ENCODE measurements at regions of chr5 and their contacts with region 1.

Region 1: DNA sequence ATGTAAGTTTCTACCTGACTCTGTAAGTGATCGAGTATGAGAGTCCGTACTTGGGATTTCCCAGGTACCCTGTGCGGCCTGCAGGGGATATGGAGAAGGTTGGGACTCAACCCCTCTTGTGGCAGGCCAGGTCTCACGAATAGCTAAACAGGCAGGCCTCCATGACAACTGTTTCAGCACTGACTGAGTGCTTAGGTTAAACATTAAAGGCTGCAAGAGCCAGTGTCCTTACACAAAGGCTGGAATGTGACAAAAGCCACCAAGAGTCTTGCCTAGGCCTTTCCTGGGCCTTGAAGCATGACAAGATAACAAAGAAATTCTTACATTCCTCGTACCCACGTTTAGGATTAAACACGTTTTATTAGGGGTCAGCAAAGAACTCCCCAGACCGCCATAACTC is 58.6 kb downstream of the THBS4 start:
- DNase-seq: no peak
- H3K4me3 ChIP-seq: no peak overlapping the region
- H3K27ac ChIP-seq: no peak overlapping the region
- H3K4me1 ChIP-seq: no peaks in the 10 kb centered on the region
- H3K27me3 ChIP-seq: no peaks in the 10 kb centered on the region
- CTCF ChIP-seq: no peak

Region 2: DNA sequence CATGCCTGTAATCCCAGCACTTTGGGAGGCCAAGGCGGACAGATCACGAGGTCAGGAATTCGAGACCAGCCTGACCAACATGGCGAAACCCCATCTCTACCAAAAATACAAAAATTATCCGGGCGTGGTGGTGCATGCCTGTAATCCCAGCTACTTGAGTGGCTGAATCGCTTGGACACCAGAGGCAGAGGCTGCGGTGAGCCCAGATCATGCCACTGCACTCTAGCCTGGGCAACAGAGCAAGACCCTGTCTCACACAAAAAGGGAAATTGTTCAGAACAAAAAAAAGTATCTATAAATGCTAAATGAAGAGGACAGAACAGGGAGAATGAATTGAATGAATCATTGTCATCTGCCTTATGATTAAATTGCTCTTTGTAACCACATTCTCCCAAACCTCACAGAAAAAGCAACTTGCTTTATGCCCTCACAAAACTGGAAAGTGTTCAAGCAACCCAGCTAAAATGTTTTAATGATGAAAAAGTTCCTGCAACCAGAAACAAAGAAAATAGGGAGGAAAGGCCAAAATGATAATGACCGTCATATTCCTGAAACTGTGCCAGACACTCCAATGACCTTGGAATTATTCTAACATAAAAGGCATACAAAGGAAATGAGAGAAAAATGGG is 78.4 kb after region 1 on chr5:
- CTCF ChIA-PET with region 1: no interaction called
- POLR2A ChIA-PET with region 1: no interaction called
- intact Hi-C with region 1: no loop called
- DNase-seq: no peak
- H3K4me3 ChIP-seq: no peak overlapping the region
- H3K27ac ChIP-seq: no peak overlapping the region
- H3K4me1 ChIP-seq: no peaks in the 10 kb centered on the region
- H3K27me3 ChIP-seq: no peaks in the 10 kb centered on the region
- CTCF ChIP-seq: no peak

Region 3: DNA sequence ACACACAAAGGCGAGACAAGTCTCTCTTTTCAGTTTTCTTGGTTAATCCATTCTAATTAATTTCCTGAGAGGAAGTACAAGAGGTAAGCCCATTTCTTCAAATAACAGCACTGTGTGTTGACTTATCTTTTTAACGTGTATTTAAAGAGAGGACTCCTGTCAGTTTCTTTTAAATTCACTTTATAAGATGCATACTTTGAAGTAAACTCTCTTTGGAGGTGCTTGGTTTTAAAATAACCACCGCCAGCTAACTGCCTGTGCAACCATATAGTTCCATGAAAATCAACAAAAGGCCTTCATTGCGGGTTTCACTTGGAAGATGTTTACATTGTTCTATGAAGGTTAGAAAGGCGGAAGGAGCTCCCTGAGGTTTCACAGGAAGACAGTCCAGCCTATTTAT is 175.1 kb after region 1 on chr5:
- CTCF ChIA-PET with region 1: interaction called, 10 read pairs
- POLR2A ChIA-PET with region 1: no interaction called
- intact Hi-C with region 1: no loop called
- DNase-seq: peak; percentile 85
- H3K4me3 ChIP-seq: peak overlapping the region; percentile 1
- H3K27ac ChIP-seq: peak overlapping the region; percentile 57
- H3K4me1 ChIP-seq: peaks cover 17% of the 10 kb centered on the region
- H3K27me3 ChIP-seq: no peaks in the 10 kb centered on the region
- CTCF ChIP-seq: no peak

Region 4: DNA sequence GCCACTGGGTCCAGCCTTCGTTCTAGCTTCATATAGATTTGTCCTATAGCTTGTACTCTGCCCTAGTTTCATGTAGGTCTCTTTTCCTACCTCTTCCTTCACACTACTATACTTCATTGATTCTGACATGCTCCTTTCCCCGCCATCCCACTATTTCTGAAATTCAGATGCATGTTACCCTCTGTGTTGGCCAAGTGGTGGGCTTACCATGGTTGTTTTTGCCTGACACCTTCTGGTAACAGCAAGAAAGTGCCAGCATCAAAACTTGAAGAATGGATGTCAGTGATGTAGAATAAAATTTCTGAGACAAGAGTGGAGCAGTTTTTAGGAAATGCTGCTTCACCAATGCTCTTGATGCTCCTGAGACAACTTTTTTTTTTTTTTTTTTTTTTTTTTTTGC is 181.6 kb after region 1 on chr5:
- CTCF ChIA-PET with region 1: interaction called, 9 read pairs
- POLR2A ChIA-PET with region 1: no interaction called
- intact Hi-C with region 1: loop called (anchors 1 kb)
- DNase-seq: peak; percentile 69
- H3K4me3 ChIP-seq: no peak overlapping the region
- H3K27ac ChIP-seq: no peak overlapping the region
- H3K4me1 ChIP-seq: no peaks in the 10 kb centered on the region
- H3K27me3 ChIP-seq: no peaks in the 10 kb centered on the region
- CTCF ChIP-seq: peak; percentile 75

Region 5: DNA sequence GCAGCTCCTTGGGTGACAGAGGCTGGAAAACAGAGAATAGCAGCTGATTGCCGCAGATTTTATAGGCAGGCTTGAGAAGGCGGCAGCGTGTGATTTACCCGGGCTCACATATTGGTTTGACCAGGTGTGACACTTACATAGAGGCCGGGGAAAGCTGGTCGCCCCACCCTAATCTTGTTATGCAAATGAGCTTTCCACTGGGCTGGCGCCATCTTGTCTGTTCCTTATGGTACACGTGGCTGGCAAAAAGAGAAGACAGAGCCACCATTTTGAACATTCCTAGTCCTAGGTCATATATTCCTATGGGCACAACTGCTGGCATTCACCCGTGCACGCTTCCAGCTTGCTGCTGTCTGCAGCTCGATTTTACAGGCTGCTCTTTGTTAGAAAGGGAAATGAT is 214.7 kb after region 1 on chr5:
- CTCF ChIA-PET with region 1: interaction called, 50 read pairs
- POLR2A ChIA-PET with region 1: no interaction called
- intact Hi-C with region 1: loop called (anchors 1 kb)
- DNase-seq: no peak
- H3K4me3 ChIP-seq: no peak overlapping the region
- H3K27ac ChIP-seq: no peak overlapping the region
- H3K4me1 ChIP-seq: no peaks in the 10 kb centered on the region
- H3K27me3 ChIP-seq: no peaks in the 10 kb centered on the region
- CTCF ChIP-seq: no peak

Region 6: GRCh38 chr5:80487829-80488721 is 394.3 kb after region 1 on chr5 and contains the start of gene FAM151B:
- CTCF ChIA-PET with region 1: no interaction called
- POLR2A ChIA-PET with region 1: no interaction called
- intact Hi-C with region 1: loop called (anchors 10 kb)
- DNase-seq: peak; percentile 94
- H3K4me3 ChIP-seq: peak within 1 kb of the TSS; percentile 72
- H3K27ac ChIP-seq: peak within 1 kb of the TSS; percentile 64
- H3K4me1 ChIP-seq: no peaks in the 10 kb centered on the region
- H3K27me3 ChIP-seq: no peaks in the 10 kb centered on the region
- CTCF ChIP-seq: peak; percentile 32; the same call in 1 of the 2 replicates
- total RNA-seq, gene FAM151B: 4.0 and 4.3 TPM in 2 replicates

Region 7: GRCh38 chr5:80672140-80672736 is 578.4 kb after region 1 on chr5:
- CTCF ChIA-PET with region 1: interaction called, 15 read pairs
- POLR2A ChIA-PET with region 1: no interaction called
- intact Hi-C with region 1: loop called (anchors 2 kb)
- DNase-seq: peak; percentile 83
- H3K4me3 ChIP-seq: no peak overlapping the region
- H3K27ac ChIP-seq: no peak overlapping the region
- H3K4me1 ChIP-seq: no peaks in the 10 kb centered on the region
- H3K27me3 ChIP-seq: no peaks in the 10 kb centered on the region
- CTCF ChIP-seq: peak; percentile 91

Region 8: GRCh38 chr5:80722916-80723315 is 629.1 kb after region 1 on chr5:
- CTCF ChIA-PET with region 1: no interaction called
- POLR2A ChIA-PET with region 1: no interaction called
- intact Hi-C with region 1: no loop called
- DNase-seq: no peak
- H3K4me3 ChIP-seq: no peak overlapping the region
- H3K27ac ChIP-seq: no peak overlapping the region
- H3K4me1 ChIP-seq: no peaks in the 10 kb centered on the region
- H3K27me3 ChIP-seq: no peaks in the 10 kb centered on the region
- CTCF ChIP-seq: no peak

Measured in A673 (cell line).